ENCODE measurements at regions of chr14 and their contacts with region 1.

Region 1: GRCh38 chr14:67837011-67837624 is 17.5 kb downstream of the RAD51B start:
- DNase-seq: peak; percentile 34
- ATAC-seq: peak; percentile 76
- H3K4me3 ChIP-seq: no peak overlapping the region
- H3K27ac ChIP-seq: no peak overlapping the region
- H3K4me1 ChIP-seq: no peaks in the 10 kb centered on the region
- H3K27me3 ChIP-seq: no peaks in the 10 kb centered on the region
- CTCF ChIP-seq: peak; percentile 55 to 79 (median 65); a peak in 5 of 6 replicates
- EP300 ChIP-seq: no peak
- POLR2A ChIP-seq: no peak
- RAD21 ChIP-seq: peak; percentile 85

Region 2: GRCh38 chr14:67856814-67857213 is 19.7 kb after region 1 on chr14:
- CTCF ChIA-PET with region 1: interaction called, 14 read pairs
- POLR2A ChIA-PET with region 1: interaction called, 3 read pairs
- RAD21 ChIA-PET with region 1: no interaction called
- SMC1A ChIA-PET with region 1: interaction called, 8 read pairs
- in situ Hi-C with region 1: no loop called
- intact Hi-C with region 1: no loop called
- DNase-seq: no peak
- ATAC-seq: no peak
- H3K4me3 ChIP-seq: no peak overlapping the region
- H3K27ac ChIP-seq: no peak overlapping the region
- H3K4me1 ChIP-seq: peaks cover 6% of the 10 kb centered on the region
- H3K27me3 ChIP-seq: no peaks in the 10 kb centered on the region
- CTCF ChIP-seq: no peak
- EP300 ChIP-seq: no peak
- POLR2A ChIP-seq: no peak
- RAD21 ChIP-seq: no peak

Region 3: DNA sequence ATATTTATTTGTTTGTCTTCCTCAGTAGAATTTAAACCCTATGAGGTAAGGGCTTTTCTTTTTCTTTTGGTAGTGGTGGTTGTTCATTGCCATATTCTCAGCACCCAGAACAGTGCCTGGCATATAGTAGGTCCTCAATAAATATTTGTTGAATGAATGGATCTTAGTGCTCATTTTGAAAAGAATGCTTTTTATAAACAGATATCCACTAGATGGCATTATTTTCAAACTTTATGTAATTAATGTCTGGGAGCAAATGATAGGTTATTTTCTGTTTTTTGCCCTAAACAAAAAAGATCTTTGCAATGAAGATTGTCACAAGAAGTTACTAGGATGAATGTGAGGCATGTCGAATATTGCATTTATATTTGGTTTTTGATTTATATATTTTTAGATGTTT is 46.6 kb after region 1 on chr14:
- CTCF ChIA-PET with region 1: interaction called, 29 read pairs
- POLR2A ChIA-PET with region 1: no interaction called
- RAD21 ChIA-PET with region 1: interaction called, 12 read pairs
- SMC1A ChIA-PET with region 1: interaction called, 26 read pairs
- in situ Hi-C with region 1: no loop called
- intact Hi-C with region 1: loop called (anchors 2 kb)
- DNase-seq: no peak
- ATAC-seq: no peak
- H3K4me3 ChIP-seq: no peak overlapping the region
- H3K27ac ChIP-seq: no peak overlapping the region
- H3K4me1 ChIP-seq: peaks cover 17% of the 10 kb centered on the region
- H3K27me3 ChIP-seq: no peaks in the 10 kb centered on the region
- CTCF ChIP-seq: peak in 1 of 3 experiments; percentile 7; a peak in 1 of 6 replicates
- EP300 ChIP-seq: no peak
- POLR2A ChIP-seq: no peak
- RAD21 ChIP-seq: no peak

Region 4: DNA sequence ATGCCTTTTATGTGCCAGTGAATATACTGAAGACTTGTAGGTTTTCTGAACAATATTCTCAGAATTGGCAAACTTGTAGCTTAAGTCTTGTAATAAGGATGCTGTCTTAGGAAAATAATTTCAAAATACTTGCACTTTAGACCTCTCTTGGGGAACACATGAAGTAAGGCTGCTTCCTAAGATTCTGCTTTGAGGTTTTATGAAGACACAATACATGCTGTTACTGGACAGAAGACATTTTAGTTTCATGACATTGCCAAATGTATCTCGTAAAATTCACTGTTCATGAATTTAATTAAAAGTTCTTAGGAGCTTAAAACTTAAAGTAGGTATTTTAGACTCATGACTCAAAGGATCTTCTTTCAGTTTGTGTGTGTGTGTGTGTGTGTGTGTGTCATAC is 63.1 kb after region 1 on chr14:
- CTCF ChIA-PET with region 1: interaction called, 10 read pairs
- POLR2A ChIA-PET with region 1: no interaction called
- RAD21 ChIA-PET with region 1: no interaction called
- SMC1A ChIA-PET with region 1: interaction called, 5 read pairs
- in situ Hi-C with region 1: no loop called
- intact Hi-C with region 1: no loop called
- DNase-seq: no peak
- ATAC-seq: no peak
- H3K4me3 ChIP-seq: no peak overlapping the region
- H3K27ac ChIP-seq: no peak overlapping the region
- H3K4me1 ChIP-seq: no peaks in the 10 kb centered on the region
- H3K27me3 ChIP-seq: no peaks in the 10 kb centered on the region
- CTCF ChIP-seq: no peak
- EP300 ChIP-seq: no peak
- POLR2A ChIP-seq: no peak
- RAD21 ChIP-seq: no peak

Region 5: GRCh38 chr14:68824517-68825347 is 987.6 kb after region 1 on chr14:
- CTCF ChIA-PET with region 1: interaction called, 5 read pairs
- POLR2A ChIA-PET with region 1: no interaction called
- RAD21 ChIA-PET with region 1: no interaction called
- SMC1A ChIA-PET with region 1: interaction called, 4 read pairs
- in situ Hi-C with region 1: loop called (anchors 5 kb)
- intact Hi-C with region 1: loop called (anchors 5 kb)
- DNase-seq: no peak
- ATAC-seq: peak; percentile 10; the same call in 1 of the 3 replicates
- H3K4me3 ChIP-seq: no peak overlapping the region
- H3K27ac ChIP-seq: no peak overlapping the region; the same call in 1 of the 2 replicates
- H3K4me1 ChIP-seq: peaks cover 50% of the 10 kb centered on the region
- H3K27me3 ChIP-seq: no peaks in the 10 kb centered on the region
- CTCF ChIP-seq: peak; percentile 90 to 93 (median 90)
- EP300 ChIP-seq: no peak
- POLR2A ChIP-seq: no peak
- RAD21 ChIP-seq: peak; percentile 64; the same call in 1 of the 2 replicates

Measured in GM12878 (cell line).